CD8-positive, alpha-beta T cell (primary cell): ENCODE measurements at regions of chr1 and their contacts with region 1.

Region 1: DNA sequence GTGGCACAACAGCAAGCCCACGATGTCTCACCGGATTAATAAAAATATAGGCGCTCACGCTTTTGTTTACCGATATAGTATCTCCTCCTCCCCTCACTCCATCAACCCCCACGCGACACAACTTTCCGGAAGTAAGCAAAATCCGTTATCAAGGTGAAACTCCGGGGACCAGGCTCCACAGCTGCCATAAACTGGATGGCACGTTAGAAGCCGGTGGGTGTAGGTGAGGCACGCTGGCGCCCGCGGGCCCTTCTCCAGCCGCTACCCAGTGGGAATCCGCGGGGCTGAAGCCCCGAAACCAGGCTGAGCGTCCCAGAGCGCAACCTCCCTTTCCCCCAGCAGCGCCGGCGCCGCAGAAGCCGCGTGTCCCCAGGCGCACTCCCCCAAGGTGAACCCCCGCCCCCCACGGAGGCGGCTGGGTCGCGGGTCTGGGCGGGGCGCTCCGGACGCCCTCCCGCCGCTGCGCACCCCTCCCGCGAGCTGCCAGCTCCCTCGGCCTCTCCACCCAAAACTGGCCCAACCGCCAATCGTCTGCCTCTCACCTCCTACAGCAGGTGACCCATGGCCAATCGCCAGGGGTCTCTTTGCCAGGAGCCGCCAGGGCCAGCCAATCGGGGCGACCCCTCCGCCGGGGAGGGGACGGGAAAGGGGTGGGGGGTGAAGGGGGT is 112.4 kb downstream of the OSBPL9 start:
- DNase-seq: peak; percentile 84 to 97 (median 91)
- ATAC-seq: peak; percentile 92
- H3K4me3 ChIP-seq: peak overlapping the region; percentile 89 to 96
- H3K4me3 Mint-ChIP-seq: peak overlapping the region; percentile 94
- H3K27ac ChIP-seq: peak overlapping the region; percentile 81 to 82
- H3K27ac Mint-ChIP-seq: peak overlapping the region; percentile 91
- H3K4me1 ChIP-seq: peaks cover 22% of the 10 kb centered on the region
- H3K4me1 Mint-ChIP-seq: peaks cover 44% of the 10 kb centered on the region
- H3K27me3 ChIP-seq: no peaks in the 10 kb centered on the region
- H3K27me3 Mint-ChIP-seq: no peaks in the 10 kb centered on the region
- CTCF ChIP-seq: no peak

Region 2: GRCh38 chr1:51247022-51247421 is 482.3 kb before region 1 on chr1:
- CTCF ChIA-PET with region 1: no interaction called
- POLR2A ChIA-PET with region 1: no interaction called
- intact Hi-C with region 1: loop called in 1 of 2 experiments (anchors 10 kb)
- DNase-seq: no peak
- ATAC-seq: no peak
- H3K4me3 ChIP-seq: no peak overlapping the region
- H3K4me3 Mint-ChIP-seq: no peak overlapping the region
- H3K27ac ChIP-seq: no peak overlapping the region
- H3K27ac Mint-ChIP-seq: no peak overlapping the region
- H3K4me1 ChIP-seq: peaks cover 10% of the 10 kb centered on the region
- H3K4me1 Mint-ChIP-seq: peaks cover 57% of the 10 kb centered on the region
- H3K27me3 ChIP-seq: no peaks in the 10 kb centered on the region
- H3K27me3 Mint-ChIP-seq: no peaks in the 10 kb centered on the region
- CTCF ChIP-seq: no peak

Region 3: DNA sequence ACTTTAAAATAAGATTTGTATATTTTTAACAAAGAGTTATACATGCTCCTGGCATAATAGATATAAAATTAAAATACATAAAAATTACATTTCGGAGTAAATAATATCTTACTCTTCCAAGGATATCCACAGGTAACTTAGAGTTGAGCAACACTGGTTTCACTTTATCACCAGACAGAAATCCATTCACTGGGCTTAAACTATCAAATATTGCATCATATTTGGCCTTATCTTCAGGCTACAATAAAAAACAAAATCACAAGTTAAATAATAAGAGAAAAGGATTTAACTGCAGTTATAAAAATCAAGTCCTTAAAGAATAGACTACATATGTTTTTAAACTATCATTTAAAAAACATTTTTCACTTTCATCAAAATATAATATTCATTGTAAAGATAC is 265.7 kb before region 1 on chr1:
- CTCF ChIA-PET with region 1: no interaction called
- POLR2A ChIA-PET with region 1: no interaction called
- intact Hi-C with region 1: no loop called
- DNase-seq: no peak
- ATAC-seq: no peak
- H3K4me3 ChIP-seq: no peak overlapping the region
- H3K4me3 Mint-ChIP-seq: no peak overlapping the region
- H3K27ac ChIP-seq: no peak overlapping the region
- H3K27ac Mint-ChIP-seq: no peak overlapping the region
- H3K4me1 ChIP-seq: no peaks in the 10 kb centered on the region
- H3K4me1 Mint-ChIP-seq: no peaks in the 10 kb centered on the region
- H3K27me3 ChIP-seq: no peaks in the 10 kb centered on the region
- H3K27me3 Mint-ChIP-seq: no peaks in the 10 kb centered on the region
- CTCF ChIP-seq: no peak

Region 4: GRCh38 chr1:51616901-51617708 is 112.2 kb before region 1 on chr1 and contains the start of gene OSBPL9:
- CTCF ChIA-PET with region 1: no interaction called
- POLR2A ChIA-PET with region 1: no interaction called
- intact Hi-C with region 1: loop called (anchors 1 kb)
- DNase-seq: peak; percentile 78 to 94 (median 87)
- ATAC-seq: peak; percentile 93
- H3K4me3 ChIP-seq: peak within 1 kb of the TSS; percentile 90 to 98
- H3K4me3 Mint-ChIP-seq: peak within 1 kb of the TSS; percentile 100
- H3K27ac ChIP-seq: peak within 1 kb of the TSS; percentile 84
- H3K27ac Mint-ChIP-seq: peak within 1 kb of the TSS; percentile 99
- H3K4me1 ChIP-seq: peaks cover 23% of the 10 kb centered on the region
- H3K4me1 Mint-ChIP-seq: peaks cover 42% of the 10 kb centered on the region
- H3K27me3 ChIP-seq: no peaks in the 10 kb centered on the region
- H3K27me3 Mint-ChIP-seq: peaks cover under 1% of the 10 kb centered on the region
- CTCF ChIP-seq: no peak
- total RNA-seq, gene OSBPL9: 48.5 to 49.2 TPM

Region 5: DNA sequence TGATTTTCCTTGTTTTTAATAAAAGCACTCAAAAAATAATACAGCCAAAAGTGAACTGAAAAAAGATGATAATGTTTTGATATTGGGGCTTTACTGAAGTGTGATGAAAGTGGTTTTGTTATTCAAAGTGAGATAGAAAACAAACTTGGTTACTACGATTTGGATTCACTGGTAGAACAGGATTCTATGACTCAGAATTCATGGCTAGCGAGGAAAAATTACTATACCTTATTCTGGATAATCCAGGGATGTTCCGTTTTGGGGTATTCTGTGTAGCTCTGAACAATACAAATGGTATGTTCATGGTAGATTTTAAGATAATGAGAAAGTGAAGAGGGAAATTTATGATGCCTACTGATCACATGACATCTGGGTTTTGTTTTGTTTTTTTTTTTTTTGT is 31.6 kb after region 1 on chr1:
- CTCF ChIA-PET with region 1: no interaction called
- POLR2A ChIA-PET with region 1: interaction called, 3 read pairs
- intact Hi-C with region 1: loop called in 1 of 2 experiments (anchors 5 kb)
- DNase-seq: no peak
- ATAC-seq: no peak
- H3K4me3 ChIP-seq: no peak overlapping the region
- H3K4me3 Mint-ChIP-seq: no peak overlapping the region
- H3K27ac ChIP-seq: no peak overlapping the region
- H3K27ac Mint-ChIP-seq: peak overlapping the region; percentile 10
- H3K4me1 ChIP-seq: no peaks in the 10 kb centered on the region
- H3K4me1 Mint-ChIP-seq: peaks cover 2% of the 10 kb centered on the region
- H3K27me3 ChIP-seq: no peaks in the 10 kb centered on the region
- H3K27me3 Mint-ChIP-seq: no peaks in the 10 kb centered on the region
- CTCF ChIP-seq: no peak

Region 6: DNA sequence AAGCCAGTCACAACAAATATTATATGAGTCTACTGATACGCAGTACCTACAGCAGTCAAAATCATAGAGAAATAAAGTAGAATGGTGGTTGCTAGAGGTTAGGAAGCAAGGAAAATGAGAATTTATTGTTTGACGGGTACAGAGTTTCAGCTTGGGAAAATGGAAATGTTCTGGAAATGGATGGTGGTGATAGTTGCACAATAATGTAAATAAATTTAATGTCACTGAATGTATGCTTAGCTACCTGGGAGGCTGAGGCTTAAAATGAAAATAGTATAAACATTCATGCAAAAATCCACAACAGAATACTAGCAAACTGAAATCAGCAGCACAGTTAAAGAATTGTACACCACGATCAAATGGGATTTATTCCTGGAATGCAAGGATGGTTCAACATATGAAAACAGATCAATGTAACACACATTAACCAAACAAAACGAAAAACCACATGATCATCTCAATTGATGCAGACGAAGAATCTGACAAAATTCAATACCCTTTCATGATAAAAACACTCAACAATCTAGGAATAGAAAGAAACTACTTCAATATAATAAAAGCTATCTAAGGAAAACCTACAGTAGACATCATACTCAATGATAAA is 812.9 kb after region 1 on chr1:
- CTCF ChIA-PET with region 1: no interaction called
- POLR2A ChIA-PET with region 1: no interaction called
- intact Hi-C with region 1: loop called in 1 of 2 experiments (anchors 10 kb)
- DNase-seq: peak in 1 of 9 experiments; percentile 14
- ATAC-seq: no peak
- H3K4me3 ChIP-seq: no peak overlapping the region
- H3K4me3 Mint-ChIP-seq: no peak overlapping the region
- H3K27ac ChIP-seq: no peak overlapping the region
- H3K27ac Mint-ChIP-seq: no peak overlapping the region
- H3K4me1 ChIP-seq: peaks cover 3% of the 10 kb centered on the region
- H3K4me1 Mint-ChIP-seq: peaks cover 35% of the 10 kb centered on the region
- H3K27me3 ChIP-seq: no peaks in the 10 kb centered on the region
- H3K27me3 Mint-ChIP-seq: no peaks in the 10 kb centered on the region
- CTCF ChIP-seq: no peak

Region 7: DNA sequence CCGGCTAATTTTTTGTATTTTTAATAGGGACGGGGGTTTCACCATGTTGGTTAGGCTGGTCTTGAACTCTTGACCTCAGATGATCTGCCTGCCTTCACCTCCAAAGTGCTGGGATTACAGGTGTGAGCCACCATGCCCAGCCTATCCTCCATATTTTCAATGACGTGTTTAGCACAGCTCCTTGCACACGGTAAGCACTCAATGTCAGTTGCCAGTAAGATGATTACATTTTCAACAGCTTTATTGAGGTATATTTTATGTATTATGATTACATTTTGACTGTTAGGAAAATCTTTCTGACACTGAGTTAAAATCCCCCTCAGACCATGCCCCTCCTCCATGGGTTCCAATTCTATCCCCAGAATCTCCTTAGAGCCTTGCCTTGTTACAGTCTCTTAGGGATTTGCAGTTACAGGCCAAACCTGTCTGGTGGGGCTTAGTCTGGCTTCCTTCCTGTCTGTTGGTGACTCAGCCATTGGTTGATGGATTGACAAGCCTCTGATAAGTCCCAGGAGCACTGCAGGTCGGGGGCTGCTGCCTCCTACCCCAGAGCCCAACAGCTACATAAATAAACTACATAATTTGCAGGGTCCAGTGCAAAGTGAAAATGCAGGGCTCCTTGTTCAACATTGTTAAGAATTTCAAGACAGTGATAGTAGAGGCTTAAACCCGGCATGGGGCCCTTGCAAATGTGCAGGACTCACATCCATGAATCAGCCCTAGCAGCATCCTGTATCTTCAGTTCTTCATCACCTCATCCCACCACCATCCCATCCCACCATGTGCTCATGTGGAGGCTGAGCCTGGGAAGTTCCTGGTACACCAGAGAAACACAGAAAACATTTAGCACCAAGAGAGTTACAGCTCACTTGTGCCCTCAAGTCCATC is 945.5 kb after region 1 on chr1:
- CTCF ChIA-PET with region 1: no interaction called
- POLR2A ChIA-PET with region 1: no interaction called
- intact Hi-C with region 1: no loop called
- DNase-seq: no peak
- ATAC-seq: peak; percentile 52
- H3K4me3 ChIP-seq: no peak overlapping the region
- H3K4me3 Mint-ChIP-seq: no peak overlapping the region
- H3K27ac ChIP-seq: no peak overlapping the region
- H3K27ac Mint-ChIP-seq: no peak overlapping the region
- H3K4me1 ChIP-seq: no peaks in the 10 kb centered on the region
- H3K4me1 Mint-ChIP-seq: peaks cover 7% of the 10 kb centered on the region
- H3K27me3 ChIP-seq: no peaks in the 10 kb centered on the region
- H3K27me3 Mint-ChIP-seq: no peaks in the 10 kb centered on the region
- CTCF ChIP-seq: no peak